Activated naive CD4-positive, alpha-beta T cell treated with anti-CD3 and anti-CD28 coated beads, Interleukin-2, amount 10 ng/mL, durations not matched to agents 7 days and 5 days (primary cell): ENCODE measurements at regions of chr9 and their contacts with region 1.

Region 1: GRCh38 chr9:6353851-6354686 is 25.9 kb downstream of the TPD52L3 start:
- DNase-seq: peak; percentile 39
- H3K4me3 Mint-ChIP-seq: no peak overlapping the region
- H3K27ac Mint-ChIP-seq: no peak overlapping the region
- H3K4me1 Mint-ChIP-seq: peaks cover 5% of the 10 kb centered on the region
- H3K27me3 Mint-ChIP-seq: peaks cover 31% of the 10 kb centered on the region

Region 2: DNA sequence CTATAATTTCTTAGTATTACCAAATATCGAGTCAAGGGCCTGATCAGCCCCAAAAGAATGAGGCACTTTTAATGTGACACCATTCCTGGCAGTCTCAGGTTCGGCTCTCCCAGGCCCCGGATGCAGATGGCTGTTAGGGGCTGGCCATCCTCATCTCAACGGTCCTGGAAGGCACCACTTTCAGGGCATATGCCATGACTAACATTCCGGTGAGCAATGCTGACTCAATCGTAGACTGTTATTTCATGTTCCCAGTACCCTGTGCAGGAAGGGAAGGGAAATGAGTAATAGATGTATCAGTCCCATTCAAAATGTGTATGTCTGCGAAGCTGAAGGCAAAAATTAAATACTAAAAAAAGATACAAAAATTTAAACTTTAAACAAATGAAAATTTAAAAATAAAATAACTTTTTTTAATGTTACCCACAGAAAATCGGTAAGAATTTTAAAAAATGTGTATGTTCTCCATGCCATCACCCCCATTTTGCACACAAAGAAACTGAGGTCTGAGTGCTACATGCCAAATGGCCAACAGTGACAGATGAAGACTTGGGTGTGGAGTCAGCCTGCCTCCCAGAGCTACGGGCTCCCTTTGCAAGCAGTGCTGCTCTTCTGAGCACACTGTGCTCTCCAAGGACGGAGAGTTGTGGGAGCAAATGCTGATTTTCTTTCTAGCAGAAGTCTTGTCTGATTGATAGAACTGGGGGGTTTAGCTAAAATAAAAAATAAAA is 212.5 kb after region 1 on chr9:
- CTCF ChIA-PET with region 1: interaction called, 133 read pairs
- DNase-seq: peak; percentile 22
- H3K4me3 Mint-ChIP-seq: no peak overlapping the region
- H3K27ac Mint-ChIP-seq: no peak overlapping the region
- H3K4me1 Mint-ChIP-seq: peaks cover 5% of the 10 kb centered on the region
- H3K27me3 Mint-ChIP-seq: peaks cover 5% of the 10 kb centered on the region